KBM-7 (cell line): ENCODE measurements at regions of chr9 and their contacts with region 1.

Region 1: GRCh38 chr9:35553670-35554543 is 51.2 kb upstream of the TESK1 start:
- DNase-seq: peak; percentile 74

Region 2: DNA sequence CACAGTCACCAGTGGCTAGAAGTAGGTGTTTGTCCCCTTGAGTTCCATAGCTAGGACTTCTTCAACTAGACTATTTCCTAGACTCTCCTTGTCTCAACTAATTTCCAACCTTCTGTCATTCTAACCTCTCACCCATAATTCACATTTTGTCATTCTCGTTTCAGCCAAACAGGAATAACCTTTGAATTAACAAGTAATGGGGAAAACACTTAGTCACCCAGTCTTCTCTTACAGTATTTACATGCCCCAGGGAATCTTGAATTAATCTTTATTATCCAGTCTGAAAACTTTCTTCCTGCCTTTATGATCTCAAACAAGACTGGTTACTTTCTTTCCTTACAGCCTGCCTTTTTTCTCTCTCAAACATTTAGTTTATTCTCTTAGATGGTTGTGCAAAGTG is 127.3 kb before region 1 on chr9:
- in situ Hi-C with region 1: no loop called
- DNase-seq: no peak

Region 3: DNA sequence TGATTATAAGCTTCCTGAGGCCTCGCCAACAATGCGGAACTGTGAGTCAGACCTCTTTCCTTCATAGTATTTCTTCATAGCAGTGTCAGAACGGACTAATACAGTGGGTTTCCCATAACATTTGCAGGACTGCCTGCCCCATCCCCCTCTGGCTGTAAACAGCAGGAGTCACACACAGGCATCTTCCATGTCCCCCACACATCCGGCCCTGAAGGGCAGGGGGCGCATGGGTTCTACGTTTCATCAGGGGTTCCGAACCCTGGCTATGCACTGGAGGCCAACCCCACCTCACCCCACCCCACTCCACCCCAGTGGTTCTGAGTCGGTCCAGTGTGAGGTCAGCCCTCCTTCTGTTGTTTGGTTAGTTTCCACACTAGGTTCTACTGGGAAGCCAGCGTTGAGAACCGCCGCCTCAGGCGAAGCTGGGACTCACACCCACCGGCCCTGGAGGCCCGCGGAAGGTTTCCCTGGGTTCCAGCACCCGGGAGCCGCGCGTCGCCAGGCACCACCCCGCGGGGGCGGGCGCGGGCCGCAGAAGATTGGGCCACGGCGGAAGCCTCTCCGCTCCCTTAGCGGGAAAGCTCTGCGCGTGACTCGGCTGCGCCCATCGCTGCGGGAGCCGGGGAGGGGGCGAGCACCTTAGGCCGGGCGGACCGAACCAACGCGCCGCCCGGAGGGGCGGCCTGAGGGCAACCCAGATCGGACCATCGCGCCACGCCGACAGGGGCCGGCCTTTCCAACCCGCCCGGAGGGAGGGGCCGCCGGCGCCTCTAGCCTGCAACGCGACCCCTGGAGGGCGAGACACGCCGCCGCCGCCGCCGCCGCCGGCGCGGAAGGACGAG is 64.4 kb before region 1 on chr9 and contains the start of gene RUSC2:
- in situ Hi-C with region 1: loop called (anchors 10 kb)
- DNase-seq: peak; percentile 93